Activated CD4-positive, alpha-beta T cell treated with anti-CD3 and anti-CD28 coated beads, Interleukin-2, amount 10 ng/mL, durations not matched to agents 24 days and 14 days (primary cell): ENCODE measurements at regions of chr14 and their contacts with region 1.

Region 1: GRCh38 chr14:104078031-104078455 is 7.5 kb upstream of the ASPG start:
- DNase-seq: peak; percentile 95
- H3K4me3 Mint-ChIP-seq: peak overlapping the region; percentile 12
- H3K27ac Mint-ChIP-seq: no peak overlapping the region
- H3K4me1 Mint-ChIP-seq: peaks cover 13% of the 10 kb centered on the region
- H3K27me3 Mint-ChIP-seq: peaks cover 7% of the 10 kb centered on the region

Region 2: DNA sequence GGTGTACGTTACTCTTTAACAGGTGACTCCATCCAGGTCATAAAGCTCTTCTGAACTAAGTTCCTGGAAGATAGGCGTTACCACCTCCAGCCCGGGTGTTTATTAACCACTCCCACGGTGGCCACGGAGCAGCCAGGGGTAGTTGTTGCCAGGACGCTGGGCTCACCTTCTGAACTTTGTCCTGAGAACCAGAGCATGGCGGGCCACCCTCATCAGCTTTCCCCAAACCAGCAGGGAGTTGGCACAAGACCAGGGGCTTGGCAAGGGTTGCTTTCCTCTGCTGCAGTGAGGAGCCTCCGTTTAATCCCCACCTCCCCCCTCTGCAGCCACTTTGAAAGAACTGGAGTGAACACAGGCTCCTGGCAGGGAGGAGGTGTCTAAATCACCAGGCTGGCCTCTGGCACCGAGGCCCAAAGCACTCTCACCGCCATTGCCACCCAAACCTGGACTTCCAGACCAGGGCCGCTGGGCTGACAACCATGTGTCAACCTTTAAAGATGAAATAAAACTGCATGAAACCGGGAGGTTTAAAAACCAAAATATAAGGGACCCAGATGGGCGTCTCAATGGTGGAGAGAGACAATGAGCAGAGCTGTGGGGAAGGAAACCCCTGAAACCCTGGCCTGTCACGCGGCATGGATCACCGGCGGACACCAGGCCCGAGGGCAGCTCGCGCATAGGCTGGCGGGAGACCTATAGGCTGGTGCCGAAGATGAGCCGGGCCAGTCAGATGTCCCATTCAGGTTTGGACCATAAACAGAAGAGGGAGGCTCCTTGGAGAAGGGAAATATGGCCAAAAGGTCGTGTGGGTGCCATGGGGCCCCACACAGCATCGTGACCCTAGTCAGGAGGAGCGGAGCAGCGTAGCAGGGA is 180.7 kb before region 1 on chr14:
- intact Hi-C with region 1: no loop called
- DNase-seq: no peak
- H3K4me3 Mint-ChIP-seq: no peak overlapping the region
- H3K27ac Mint-ChIP-seq: no peak overlapping the region
- H3K4me1 Mint-ChIP-seq: peaks cover 2% of the 10 kb centered on the region
- H3K27me3 Mint-ChIP-seq: peaks cover 1% of the 10 kb centered on the region

Region 3: DNA sequence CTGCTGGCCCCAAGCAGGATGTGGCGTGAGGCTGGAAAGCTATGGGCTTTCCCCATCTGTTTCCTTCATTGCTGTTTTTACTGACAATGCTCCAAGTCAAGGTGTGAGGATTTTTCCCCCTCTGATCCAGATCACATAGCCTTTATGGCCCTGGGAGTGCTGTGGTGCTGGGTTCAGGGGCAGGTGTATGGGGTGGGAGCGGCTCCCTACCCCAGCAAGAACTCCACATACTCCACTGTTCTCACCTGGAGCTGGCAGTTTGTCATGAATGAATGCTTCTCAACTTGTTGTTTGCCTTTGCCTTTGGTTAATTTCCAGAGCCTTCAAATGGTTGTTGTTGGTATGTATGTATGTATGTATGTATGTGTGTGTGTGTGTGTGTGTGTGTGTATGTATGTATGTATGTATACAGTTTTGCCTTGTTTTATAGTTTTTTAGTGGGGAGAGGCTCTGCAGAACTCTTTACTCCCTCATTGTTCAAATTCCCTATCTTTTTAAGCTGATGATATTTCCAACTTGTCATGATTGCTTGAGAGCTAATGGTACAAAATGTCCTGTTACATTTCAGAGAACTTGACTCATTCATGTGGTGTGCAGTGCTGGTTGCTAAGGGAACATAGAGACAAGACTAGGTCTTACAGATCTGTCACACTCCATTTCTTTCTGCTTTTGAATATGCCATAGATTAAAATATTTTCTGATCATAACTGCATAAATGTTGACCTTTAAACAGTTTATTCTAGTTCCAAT is 29.1 kb before region 1 on chr14:
- intact Hi-C with region 1: no loop called
- DNase-seq: no peak
- H3K4me3 Mint-ChIP-seq: no peak overlapping the region
- H3K27ac Mint-ChIP-seq: no peak overlapping the region
- H3K4me1 Mint-ChIP-seq: peaks cover 7% of the 10 kb centered on the region
- H3K27me3 Mint-ChIP-seq: peaks cover 4% of the 10 kb centered on the region

Region 4: DNA sequence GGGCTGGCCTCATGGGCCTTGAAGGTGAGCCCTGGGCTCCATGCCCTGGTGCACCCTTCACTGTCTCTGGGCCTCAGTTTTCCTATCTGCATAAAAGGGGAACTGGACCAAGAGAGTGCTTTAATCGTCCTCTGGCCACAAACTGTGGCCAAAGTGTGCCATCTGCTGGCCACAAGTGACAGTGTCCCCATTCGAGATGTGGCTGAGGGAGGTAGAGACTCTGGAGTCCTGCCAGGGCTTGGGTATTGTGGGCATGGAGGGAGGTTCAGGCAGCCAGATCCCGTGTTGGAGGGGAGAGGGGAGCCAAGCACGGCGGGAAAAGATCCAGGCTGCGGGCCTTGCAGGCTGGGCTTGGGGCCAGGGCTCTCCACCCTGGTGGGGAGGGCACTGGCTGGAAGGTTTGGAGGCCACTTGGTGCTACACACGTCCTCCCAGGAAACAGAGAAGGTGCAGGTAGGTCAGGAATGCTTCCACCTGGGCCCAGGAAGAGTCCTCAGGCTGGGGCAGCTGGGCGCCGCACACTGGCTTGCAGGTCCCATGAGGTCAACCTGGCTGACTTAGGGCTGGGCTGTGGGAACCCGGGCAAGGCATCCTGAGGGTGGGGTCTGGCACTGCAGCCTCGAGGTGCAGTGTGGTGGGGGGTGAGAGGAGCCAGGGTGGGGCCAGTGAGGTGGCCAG is 53.1 kb after region 1 on chr14:
- intact Hi-C with region 1: loop called (anchors 1 kb)
- DNase-seq: peak; percentile 68
- H3K4me3 Mint-ChIP-seq: no peak overlapping the region
- H3K27ac Mint-ChIP-seq: no peak overlapping the region
- H3K4me1 Mint-ChIP-seq: no peaks in the 10 kb centered on the region
- H3K27me3 Mint-ChIP-seq: peaks cover 18% of the 10 kb centered on the region

Region 5: GRCh38 chr14:104545151-104545941 is 467.3 kb after region 1 on chr14:
- intact Hi-C with region 1: no loop called
- DNase-seq: no peak
- H3K4me3 Mint-ChIP-seq: no peak overlapping the region
- H3K27ac Mint-ChIP-seq: no peak overlapping the region
- H3K4me1 Mint-ChIP-seq: no peaks in the 10 kb centered on the region
- H3K27me3 Mint-ChIP-seq: peaks cover 2% of the 10 kb centered on the region